Activated CD8-positive, alpha-beta T cell treated with anti-CD3 and anti-CD28 coated beads, Interleukin-2, amount 10 ng/mL, durations not matched to agents 7 days and 5 days (primary cell): ENCODE measurements at regions of chr1 and their contacts with region 1.

Region 1: DNA sequence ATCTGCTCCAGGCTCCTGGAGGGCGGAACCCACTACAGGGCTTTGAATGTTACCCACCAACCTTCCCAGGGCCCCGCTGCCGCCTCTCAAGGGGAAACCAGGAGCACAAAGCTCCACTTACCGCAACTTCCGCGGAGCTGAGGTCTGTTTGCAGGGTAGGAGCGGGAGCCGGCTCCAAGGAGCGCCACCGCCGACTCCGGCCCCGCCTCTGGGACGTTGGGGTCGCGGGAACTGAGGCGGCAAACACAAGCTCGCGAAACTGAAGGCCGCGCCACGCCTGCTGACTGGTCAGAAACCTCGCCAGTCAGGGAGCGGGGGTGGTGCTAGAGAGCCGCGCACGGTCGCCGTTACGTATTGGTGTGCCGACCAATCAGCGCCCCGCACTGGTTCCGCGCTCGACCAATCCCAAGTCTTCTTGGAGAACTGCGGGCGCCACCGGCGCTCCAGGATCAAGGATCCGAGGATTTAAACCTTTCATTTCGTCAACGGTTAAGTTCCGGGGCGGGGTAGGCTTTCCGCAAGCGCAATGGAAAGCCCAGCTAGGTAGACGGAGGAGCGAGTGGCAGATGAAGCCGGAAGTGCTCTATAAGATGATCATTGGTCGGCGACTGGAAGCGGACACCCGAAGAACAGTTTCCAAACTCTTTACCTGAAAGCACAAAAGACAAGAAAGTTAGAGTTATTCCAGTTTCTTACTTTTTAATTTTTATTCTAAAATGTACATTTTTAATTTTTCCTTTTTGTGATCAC is at the start of gene STIL:
- DNase-seq: peak; percentile 99
- ATAC-seq: peak; percentile 97
- H3K4me3 Mint-ChIP-seq: peak within 1 kb of the TSS; percentile 85
- H3K27ac Mint-ChIP-seq: peak within 1 kb of the TSS; percentile 93
- H3K4me1 Mint-ChIP-seq: peaks cover 23% of the 10 kb centered on the region
- H3K27me3 Mint-ChIP-seq: no peaks in the 10 kb centered on the region
- total RNA-seq, gene STIL: 48.0 to 50.1 TPM

Region 2: DNA sequence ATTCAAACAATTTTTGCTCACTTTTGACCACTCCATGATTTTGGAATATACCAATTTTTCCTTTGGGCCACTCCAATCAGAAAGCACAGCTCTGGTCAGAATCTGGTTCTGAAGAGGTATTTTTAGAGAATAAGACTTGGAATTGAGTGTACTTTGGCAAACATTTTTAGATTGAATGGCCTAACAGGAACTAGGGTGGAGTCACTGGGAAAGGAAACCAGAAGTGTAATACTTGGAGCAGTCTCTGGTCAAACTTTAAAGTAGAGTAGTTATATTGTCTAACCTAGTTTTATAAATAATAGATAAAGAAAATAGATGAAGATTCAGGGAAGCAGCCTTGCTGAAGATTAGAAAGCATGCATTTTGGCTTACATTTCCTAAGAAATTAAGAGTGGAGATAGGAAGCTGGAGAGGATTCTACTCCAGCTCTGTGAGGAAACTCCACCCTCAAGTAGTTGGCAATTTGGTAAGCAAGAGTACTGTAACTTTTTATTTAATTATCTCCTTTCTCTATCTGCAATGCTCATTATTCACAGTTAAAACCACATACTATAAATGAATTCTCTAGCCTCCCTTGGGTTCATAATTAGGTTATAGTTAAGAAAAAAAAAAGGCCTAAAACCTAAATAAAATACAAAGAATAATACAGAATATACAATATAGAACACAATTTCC is 15.9 kb before region 1 on chr1:
- CTCF ChIA-PET with region 1: no interaction called
- POLR2A ChIA-PET with region 1: no interaction called
- DNase-seq: no peak
- ATAC-seq: no peak
- H3K4me3 Mint-ChIP-seq: no peak overlapping the region
- H3K27ac Mint-ChIP-seq: no peak overlapping the region
- H3K4me1 Mint-ChIP-seq: peaks cover 1% of the 10 kb centered on the region
- H3K27me3 Mint-ChIP-seq: no peaks in the 10 kb centered on the region

Region 3: GRCh38 chr1:47325530-47325929 is 11.4 kb after region 1 on chr1:
- CTCF ChIA-PET with region 1: interaction called, 12 read pairs
- POLR2A ChIA-PET with region 1: interaction called, 6 read pairs
- DNase-seq: no peak
- ATAC-seq: no peak
- H3K4me3 Mint-ChIP-seq: no peak overlapping the region
- H3K27ac Mint-ChIP-seq: no peak overlapping the region
- H3K4me1 Mint-ChIP-seq: no peaks in the 10 kb centered on the region
- H3K27me3 Mint-ChIP-seq: no peaks in the 10 kb centered on the region

Region 4: DNA sequence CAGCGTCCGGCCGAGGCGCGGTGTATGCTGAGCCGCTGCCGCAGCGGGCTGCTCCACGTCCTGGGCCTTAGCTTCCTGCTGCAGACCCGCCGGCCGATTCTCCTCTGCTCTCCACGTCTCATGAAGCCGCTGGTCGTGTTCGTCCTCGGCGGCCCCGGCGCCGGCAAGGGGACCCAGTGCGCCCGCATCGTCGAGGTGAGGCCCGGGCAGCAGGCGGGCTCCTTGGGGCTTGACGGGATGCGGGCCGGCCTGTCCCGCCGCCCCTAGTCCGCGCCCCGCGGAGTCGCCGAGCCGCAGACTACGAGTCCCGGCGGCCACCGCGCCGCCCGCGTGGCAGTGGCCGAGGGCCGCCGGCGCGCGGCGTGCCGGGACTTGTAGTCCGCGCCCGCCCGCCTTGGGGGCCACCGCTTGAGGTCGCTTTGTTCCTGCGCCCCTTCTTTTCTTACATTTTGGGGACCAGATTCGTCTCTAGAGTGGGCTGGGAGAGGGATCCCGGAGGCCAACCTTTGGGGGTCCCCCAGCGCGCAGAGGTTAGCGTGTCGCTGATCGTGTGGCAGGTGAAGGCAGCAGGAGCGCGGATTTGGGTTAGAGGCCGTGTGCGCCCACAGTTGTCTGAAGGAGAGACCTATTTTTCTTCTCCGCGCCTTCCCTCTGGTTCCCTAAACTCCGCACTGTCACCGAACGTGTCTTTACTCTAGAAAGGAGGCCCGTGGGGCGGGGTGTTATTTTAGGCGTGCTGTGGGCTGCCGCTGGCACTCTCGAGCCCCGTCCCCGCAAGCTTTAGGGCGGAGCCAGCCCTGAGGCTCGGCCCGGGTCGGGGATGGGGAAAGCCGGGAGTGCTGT is 20.1 kb after region 1 on chr1:
- CTCF ChIA-PET with region 1: interaction called, 11 read pairs
- POLR2A ChIA-PET with region 1: interaction called, 31 read pairs
- DNase-seq: peak; percentile 78
- ATAC-seq: peak; percentile 89
- H3K4me3 Mint-ChIP-seq: peak overlapping the region; percentile 92
- H3K27ac Mint-ChIP-seq: peak overlapping the region; percentile 91
- H3K4me1 Mint-ChIP-seq: peaks cover 15% of the 10 kb centered on the region
- H3K27me3 Mint-ChIP-seq: no peaks in the 10 kb centered on the region

Region 5: DNA sequence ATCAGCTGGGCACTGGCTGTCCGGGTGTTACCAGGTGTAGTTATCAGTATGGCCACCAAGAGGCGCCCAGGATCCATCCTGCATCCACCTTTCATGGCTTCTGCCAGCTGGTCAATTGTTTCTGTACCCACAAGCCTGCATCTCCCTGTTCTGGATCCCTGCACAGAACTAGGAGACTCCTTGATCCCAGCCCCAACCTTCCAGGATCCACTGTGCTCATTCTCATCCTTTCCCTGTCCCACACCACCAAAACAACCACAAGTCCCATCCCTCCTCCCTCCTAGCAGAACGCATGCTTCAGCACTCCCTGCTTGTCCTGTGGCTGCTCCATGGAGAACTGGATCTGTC is 74.8 kb after region 1 on chr1:
- CTCF ChIA-PET with region 1: no interaction called
- POLR2A ChIA-PET with region 1: no interaction called
- DNase-seq: peak; percentile 62
- ATAC-seq: peak; percentile 67
- H3K4me3 Mint-ChIP-seq: no peak overlapping the region
- H3K27ac Mint-ChIP-seq: no peak overlapping the region
- H3K4me1 Mint-ChIP-seq: no peaks in the 10 kb centered on the region
- H3K27me3 Mint-ChIP-seq: peaks cover 14% of the 10 kb centered on the region